ENCODE measurements at regions of chr22 and their contacts with region 1.

Region 1: DNA sequence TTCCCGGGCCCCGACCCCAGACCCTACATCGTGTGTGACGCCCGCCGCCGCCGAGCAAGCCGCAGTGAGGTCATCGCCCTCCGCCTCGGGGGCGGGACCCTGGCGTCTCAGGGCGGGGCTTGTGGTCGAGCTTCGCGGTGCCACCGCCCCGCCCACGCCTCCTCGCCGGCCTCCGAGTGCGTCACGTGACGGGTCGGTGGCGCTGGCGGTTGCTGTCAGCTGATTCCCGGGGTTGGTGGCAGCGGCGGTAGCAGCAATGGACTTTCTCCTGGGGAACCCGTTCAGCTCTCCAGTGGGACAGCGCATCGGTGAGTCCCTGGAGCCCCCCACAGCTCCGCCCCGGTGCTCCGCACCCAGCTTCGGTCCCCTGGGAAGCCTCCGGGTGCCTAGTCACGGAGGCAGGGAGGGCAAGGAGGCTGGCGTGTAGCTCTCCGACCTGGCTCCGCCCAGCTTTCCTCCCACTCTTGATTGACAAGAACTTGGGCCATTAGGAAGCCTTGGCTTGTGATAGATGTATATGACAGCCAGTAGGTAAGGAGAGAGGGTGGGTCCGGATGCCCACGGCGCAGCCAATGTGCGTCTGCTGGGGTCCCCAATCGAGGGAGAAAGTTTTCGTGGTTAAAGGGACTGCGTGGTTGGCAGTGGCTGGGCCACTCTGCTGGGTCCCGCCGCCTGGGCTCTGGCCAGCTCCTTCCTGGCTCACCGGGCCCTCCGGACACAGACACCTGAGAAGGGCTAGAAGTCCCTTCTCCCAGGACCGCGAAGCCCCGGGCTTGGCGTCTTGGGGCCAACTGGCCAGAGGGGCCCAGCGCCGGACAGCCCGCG is at the start of gene TOM1:
- DNase-seq: peak; percentile 95
- H3K4me3 Mint-ChIP-seq: peak within 1 kb of the TSS; percentile 92
- H3K27ac Mint-ChIP-seq: peak within 1 kb of the TSS; percentile 93
- H3K4me1 Mint-ChIP-seq: peaks cover 24% of the 10 kb centered on the region
- H3K27me3 Mint-ChIP-seq: no peaks in the 10 kb centered on the region
- total RNA-seq, gene TOM1: 37.3 to 41.4 TPM

Region 2: DNA sequence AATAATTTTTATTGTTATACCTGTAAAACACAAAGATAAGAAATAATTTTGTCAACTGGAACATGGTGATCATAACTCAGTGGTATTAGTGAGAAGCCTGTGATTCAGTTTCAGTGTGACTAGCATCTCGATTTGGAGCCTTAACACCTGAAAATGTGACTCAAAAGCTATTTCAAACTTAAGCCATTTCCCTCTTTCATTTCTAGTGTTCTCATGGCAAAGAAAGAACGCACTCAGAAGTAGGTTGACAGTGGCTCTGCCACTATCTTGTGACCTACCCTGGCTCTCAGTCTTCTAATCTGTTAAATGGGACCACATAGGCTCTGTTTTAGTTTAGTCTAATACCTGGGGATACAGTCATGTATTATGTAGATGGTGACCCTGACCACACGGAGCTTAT is 171.2 kb before region 1 on chr22:
- CTCF ChIA-PET with region 1: no interaction called
- POLR2A ChIA-PET with region 1: no interaction called
- DNase-seq: no peak
- H3K4me3 Mint-ChIP-seq: no peak overlapping the region
- H3K27ac Mint-ChIP-seq: no peak overlapping the region
- H3K4me1 Mint-ChIP-seq: peaks cover 2% of the 10 kb centered on the region
- H3K27me3 Mint-ChIP-seq: peaks cover 20% of the 10 kb centered on the region

Region 3: DNA sequence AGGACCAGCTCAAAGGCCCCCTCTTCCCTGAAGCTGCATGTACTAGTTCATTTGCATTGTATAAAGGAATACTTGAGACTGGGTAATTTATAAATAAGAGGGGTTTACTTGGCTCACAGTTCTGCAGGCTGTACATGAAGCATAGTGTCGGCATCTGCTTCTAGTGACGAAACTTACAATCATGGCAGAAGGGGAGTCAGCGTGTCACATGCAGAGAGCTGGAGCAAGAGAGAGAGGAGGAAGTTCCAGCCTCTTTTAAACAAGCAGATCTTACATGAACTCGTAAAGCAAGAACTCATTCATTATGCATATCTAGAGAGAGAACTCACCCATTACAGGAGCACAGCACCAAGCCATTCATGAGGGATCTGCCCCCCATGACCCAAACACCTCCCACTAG is 49.7 kb before region 1 on chr22:
- CTCF ChIA-PET with region 1: no interaction called
- POLR2A ChIA-PET with region 1: no interaction called
- DNase-seq: no peak
- H3K4me3 Mint-ChIP-seq: no peak overlapping the region
- H3K27ac Mint-ChIP-seq: no peak overlapping the region
- H3K4me1 Mint-ChIP-seq: no peaks in the 10 kb centered on the region
- H3K27me3 Mint-ChIP-seq: peaks cover 8% of the 10 kb centered on the region

Region 4: DNA sequence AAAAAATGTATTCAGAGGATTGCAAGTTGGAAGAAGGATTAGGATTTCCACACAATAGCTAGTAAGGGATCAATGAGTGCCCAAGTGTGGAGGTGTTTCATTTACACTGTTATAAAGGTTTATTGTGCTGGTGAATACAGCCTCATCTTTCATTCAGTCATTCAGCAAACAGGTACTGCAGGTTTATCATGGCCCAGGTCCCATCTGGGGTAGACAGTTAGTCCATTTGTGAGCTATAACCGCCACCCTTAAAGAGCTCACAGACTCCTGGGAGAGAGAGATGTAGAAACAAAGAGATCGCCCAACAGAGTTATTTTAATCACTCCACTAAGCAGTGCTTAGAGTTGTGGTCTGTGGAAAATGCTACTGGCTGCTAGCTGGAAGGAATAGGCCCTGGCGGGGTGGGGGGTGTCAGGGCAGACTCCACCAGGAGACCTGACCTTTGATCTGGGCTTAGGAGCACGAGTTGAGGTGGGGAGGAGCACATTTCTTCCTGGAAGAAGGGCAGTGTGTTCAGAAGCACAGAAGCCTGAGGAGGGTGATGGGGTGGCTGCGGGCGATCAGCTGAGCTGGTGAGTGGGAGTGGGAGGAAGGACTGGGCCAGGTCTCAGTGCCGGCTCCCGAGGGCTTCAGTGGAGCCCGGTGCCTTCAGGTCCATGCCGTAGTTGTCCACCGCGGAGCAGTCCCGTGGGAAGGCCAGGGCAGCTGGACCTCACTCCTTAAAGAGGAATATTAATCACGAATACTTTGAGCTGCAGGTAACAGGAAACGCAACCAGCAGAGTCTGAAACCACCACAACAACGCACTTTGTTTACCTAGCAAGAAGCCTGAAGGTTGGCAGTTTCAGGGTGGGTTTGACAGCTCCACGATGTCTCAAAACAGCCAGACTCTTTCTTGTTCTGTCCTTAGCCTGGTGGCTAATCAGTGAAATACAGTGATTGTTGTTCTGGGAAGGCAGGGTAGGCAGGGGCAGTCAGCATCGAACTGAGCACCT is 11.0 kb after region 1 on chr22:
- CTCF ChIA-PET with region 1: interaction called, 5 read pairs
- POLR2A ChIA-PET with region 1: interaction called, 18 read pairs
- DNase-seq: no peak
- H3K4me3 Mint-ChIP-seq: no peak overlapping the region
- H3K27ac Mint-ChIP-seq: peak overlapping the region; percentile 61
- H3K4me1 Mint-ChIP-seq: peaks cover 95% of the 10 kb centered on the region
- H3K27me3 Mint-ChIP-seq: no peaks in the 10 kb centered on the region

Region 5: DNA sequence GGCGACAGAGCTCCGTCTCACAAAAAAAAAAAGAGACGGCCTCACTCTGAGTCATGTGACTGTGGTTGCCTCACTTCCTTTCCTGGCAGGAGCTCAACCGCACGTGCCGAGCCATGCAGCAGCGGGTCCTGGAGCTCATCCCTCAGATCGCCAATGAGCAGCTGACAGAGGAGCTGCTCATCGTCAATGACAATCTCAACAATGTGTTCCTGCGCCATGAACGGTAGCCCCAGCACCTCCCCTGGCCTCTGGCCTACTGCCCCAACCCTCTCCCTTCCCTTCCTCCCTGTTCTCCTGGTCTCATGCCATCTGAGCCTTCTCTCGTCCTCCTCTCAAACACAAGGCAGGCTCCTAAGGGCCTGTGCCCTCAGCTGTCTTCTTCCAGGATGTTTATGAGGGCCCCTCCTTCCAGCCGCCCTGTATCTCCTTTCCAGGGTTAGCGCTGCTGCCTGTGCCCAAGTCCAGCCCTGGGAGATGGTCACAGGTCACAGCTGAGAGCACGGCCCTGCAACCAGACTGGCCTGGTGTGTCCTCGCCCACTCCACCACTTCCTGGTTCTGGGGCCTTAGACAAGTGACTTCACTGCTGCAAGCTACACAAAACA is 30.5 kb after region 1 on chr22:
- CTCF ChIA-PET with region 1: interaction called, 15 read pairs
- POLR2A ChIA-PET with region 1: interaction called, 15 read pairs
- DNase-seq: peak; percentile 70
- H3K4me3 Mint-ChIP-seq: peak overlapping the region; percentile 22
- H3K27ac Mint-ChIP-seq: peak overlapping the region; percentile 71
- H3K4me1 Mint-ChIP-seq: peaks cover 45% of the 10 kb centered on the region
- H3K27me3 Mint-ChIP-seq: no peaks in the 10 kb centered on the region